H1 (cell line): ENCODE measurements at regions of chr3 and their contacts with region 1.

Region 1: GRCh38 chr3:32821686-32822296 is 4.0 kb downstream of the TRIM71 start:
- DNase-seq: no peak
- H3K4me3 ChIP-seq: peak overlapping the region; percentile 88 to 98 (median 94)
- H3K27ac ChIP-seq: peak overlapping the region; percentile 50
- H3K4me1 ChIP-seq: peaks cover 4 to 25% (median 17%) of the 10 kb centered on the region in 4 experiments
- H3K27me3 ChIP-seq: no peaks in the 10 kb centered on the region
- CTCF ChIP-seq: no peak
- EP300 ChIP-seq: no peak
- POLR2A ChIP-seq: peak in 1 of 2 experiments; percentile 19; a peak in 1 of 3 replicates
- RAD21 ChIP-seq: 0 out of 4 replicates have a peak, but pooled peaks of 1 of the 2 experiments have one; percentile 4

Region 2: DNA sequence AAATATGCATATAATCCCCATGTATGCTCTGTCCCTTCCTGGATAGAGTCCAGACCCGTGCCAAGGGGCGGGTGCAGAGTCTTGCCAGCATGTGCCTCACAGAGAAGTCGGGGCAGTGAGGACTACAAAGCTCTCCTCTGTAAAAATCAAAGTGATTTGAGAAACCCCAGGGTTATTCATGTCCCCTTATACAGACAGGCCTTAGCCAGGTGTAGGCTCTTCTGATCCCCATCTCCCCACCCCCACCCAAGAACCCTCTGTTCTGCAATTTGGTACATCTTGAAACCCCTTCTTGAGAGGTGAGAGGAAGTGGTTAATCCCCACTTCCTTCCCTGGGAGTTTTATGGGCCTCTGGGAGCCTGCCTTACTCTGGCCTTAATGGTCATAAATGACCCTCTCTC is 20.7 kb after region 1 on chr3:
- CTCF ChIA-PET with region 1: interaction called, 10 read pairs
- POLR2A ChIA-PET with region 1: interaction called, 303 read pairs
- DNase-seq: no peak
- H3K4me3 ChIP-seq: peak overlapping the region in 3 of 4 experiments; percentile 12 to 57 (median 35); a peak in 5 of 8 replicates
- H3K27ac ChIP-seq: peak overlapping the region; percentile 51; the same call in 1 of the 2 replicates
- H3K4me1 ChIP-seq: peaks cover 43 to 68% (median 61%) of the 10 kb centered on the region in 4 experiments
- H3K27me3 ChIP-seq: no peaks in the 10 kb centered on the region
- CTCF ChIP-seq: no peak
- EP300 ChIP-seq: no peak
- POLR2A ChIP-seq: peak in 1 of 2 experiments; percentile 60; a peak in 2 of 3 replicates
- RAD21 ChIP-seq: no peak

Region 3: DNA sequence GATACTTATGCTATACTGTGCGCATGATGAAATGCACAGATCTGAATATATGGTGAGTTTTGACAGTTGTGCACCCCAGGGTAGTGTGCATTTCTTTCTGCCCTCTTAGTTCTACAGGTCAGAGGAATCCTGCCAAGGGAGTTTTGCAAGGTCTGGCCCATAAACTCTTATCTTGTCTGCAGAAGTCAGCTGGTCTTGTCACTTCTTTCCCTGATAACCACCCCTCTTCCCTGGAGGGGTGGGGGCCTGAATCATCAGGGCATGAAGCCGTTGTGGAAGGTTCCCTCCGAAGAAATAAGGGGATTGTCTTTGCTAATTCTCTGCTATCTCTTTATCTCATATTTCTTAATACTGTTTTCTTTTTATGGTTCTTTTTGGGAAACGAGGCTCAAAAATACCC is 26.4 kb after region 1 on chr3:
- CTCF ChIA-PET with region 1: interaction called, 10 read pairs
- POLR2A ChIA-PET with region 1: interaction called, 303 read pairs
- DNase-seq: no peak
- H3K4me3 ChIP-seq: peak overlapping the region in 1 of 4 experiments; percentile 37; a peak in 1 of 8 replicates
- H3K27ac ChIP-seq: no peak overlapping the region
- H3K4me1 ChIP-seq: peaks cover 40 to 63% (median 51%) of the 10 kb centered on the region in 4 experiments
- H3K27me3 ChIP-seq: no peaks in the 10 kb centered on the region
- CTCF ChIP-seq: no peak
- EP300 ChIP-seq: no peak
- POLR2A ChIP-seq: no peak; a peak in 2 of 3 replicates
- RAD21 ChIP-seq: no peak

Region 4: GRCh38 chr3:32856355-32856889 is 34.6 kb after region 1 on chr3:
- CTCF ChIA-PET with region 1: interaction called, 4 read pairs
- POLR2A ChIA-PET with region 1: interaction called, 64 read pairs
- DNase-seq: no peak
- H3K4me3 ChIP-seq: no peak overlapping the region
- H3K27ac ChIP-seq: no peak overlapping the region
- H3K4me1 ChIP-seq: peaks cover 32 to 63% (median 43%) of the 10 kb centered on the region in 4 experiments
- H3K27me3 ChIP-seq: no peaks in the 10 kb centered on the region; a peak in 1 of 7 replicates
- CTCF ChIP-seq: no peak
- EP300 ChIP-seq: no peak
- POLR2A ChIP-seq: no peak
- RAD21 ChIP-seq: no peak

Region 5: GRCh38 chr3:32865405-32865804 is 43.6 kb after region 1 on chr3:
- CTCF ChIA-PET with region 1: interaction called, 4 read pairs
- POLR2A ChIA-PET with region 1: interaction called, 72 read pairs
- DNase-seq: no peak
- H3K4me3 ChIP-seq: no peak overlapping the region
- H3K27ac ChIP-seq: no peak overlapping the region
- H3K4me1 ChIP-seq: peaks cover 41 to 65% (median 63%) of the 10 kb centered on the region in 4 experiments
- H3K27me3 ChIP-seq: no peaks in the 10 kb centered on the region
- CTCF ChIP-seq: no peak
- EP300 ChIP-seq: no peak
- POLR2A ChIP-seq: no peak
- RAD21 ChIP-seq: no peak

Region 6: GRCh38 chr3:32882603-32883025 is 60.8 kb after region 1 on chr3:
- CTCF ChIA-PET with region 1: interaction called, 4 read pairs
- POLR2A ChIA-PET with region 1: interaction called, 13 read pairs
- DNase-seq: no peak
- H3K4me3 ChIP-seq: no peak overlapping the region
- H3K27ac ChIP-seq: no peak overlapping the region
- H3K4me1 ChIP-seq: peaks cover 4 to 23% (median 17%) of the 10 kb centered on the region in 4 experiments; a peak in 6 of 7 replicates
- H3K27me3 ChIP-seq: no peaks in the 10 kb centered on the region
- CTCF ChIP-seq: no peak
- EP300 ChIP-seq: no peak
- POLR2A ChIP-seq: no peak
- RAD21 ChIP-seq: no peak

Region 7: DNA sequence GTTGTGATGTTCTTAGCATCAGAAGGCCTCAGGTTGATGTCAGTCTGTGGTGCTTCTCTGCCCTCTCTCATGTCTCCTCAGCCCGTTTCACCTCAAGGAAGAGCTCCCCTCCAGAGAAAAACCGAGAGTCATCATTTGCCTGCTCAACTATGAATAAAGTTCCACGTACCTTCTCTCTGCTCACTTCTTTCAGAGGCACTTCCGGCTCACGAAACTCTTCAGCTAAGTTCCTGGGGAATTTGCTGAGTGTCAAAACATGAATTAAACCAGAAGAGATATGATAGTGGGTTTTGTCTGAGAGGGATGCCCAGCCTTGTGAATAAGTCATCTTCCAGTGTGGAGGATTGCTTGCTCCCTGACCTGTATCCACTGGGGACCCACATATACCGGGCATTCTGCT is 167.4 kb after region 1 on chr3:
- CTCF ChIA-PET with region 1: no interaction called
- POLR2A ChIA-PET with region 1: no interaction called
- DNase-seq: no peak
- H3K4me3 ChIP-seq: no peak overlapping the region
- H3K27ac ChIP-seq: no peak overlapping the region
- H3K4me1 ChIP-seq: no peaks in the 10 kb centered on the region
- H3K27me3 ChIP-seq: no peaks in the 10 kb centered on the region
- CTCF ChIP-seq: no peak
- EP300 ChIP-seq: no peak
- POLR2A ChIP-seq: no peak
- RAD21 ChIP-seq: no peak